ENCODE measurements at regions of chr15 and their contacts with region 1.

Region 1: DNA sequence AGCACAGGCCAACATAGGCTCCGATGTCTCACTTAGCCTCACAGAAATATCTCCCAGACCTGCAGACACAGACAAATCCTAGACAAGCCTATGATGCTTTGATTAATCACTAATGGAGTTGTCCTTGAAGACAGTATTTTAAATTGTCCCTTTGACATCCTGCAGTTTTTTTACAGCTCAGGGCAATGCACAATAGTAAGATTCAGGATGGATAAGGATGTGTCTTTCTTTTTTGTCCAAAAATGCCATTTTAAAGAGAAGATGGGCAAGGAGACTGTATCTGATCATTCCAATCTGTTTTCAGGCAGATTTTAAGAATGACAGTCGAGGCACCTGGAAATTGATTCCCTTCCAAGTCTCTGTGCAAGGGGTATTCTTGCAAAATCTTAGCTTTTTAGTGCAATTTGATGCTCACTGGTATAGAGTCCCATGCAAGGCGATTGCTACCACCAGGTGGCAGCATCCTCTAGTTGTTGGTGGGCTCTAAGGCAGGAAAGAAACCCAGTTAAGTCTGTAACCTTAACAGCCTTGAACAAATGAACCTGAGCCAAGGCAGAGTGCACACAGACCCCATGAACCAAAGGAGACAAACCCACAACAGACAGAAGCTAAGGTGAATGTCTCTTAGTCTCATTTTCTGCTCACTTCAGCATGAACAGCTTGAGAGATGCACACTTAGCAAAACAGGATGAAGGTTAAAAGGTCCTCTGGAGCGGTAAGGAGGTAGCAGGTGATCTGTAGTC is 51.2 kb upstream of the MINAR1 start:
- DNase-seq: peak; percentile 62 to 86
- ATAC-seq: peak; percentile 62 to 86 (median 79)
- H3K4me3 ChIP-seq: no peak overlapping the region
- H3K4me3 Mint-ChIP-seq: no peak overlapping the region
- H3K27ac ChIP-seq: no peak overlapping the region
- H3K27ac Mint-ChIP-seq: no peak overlapping the region
- H3K4me1 ChIP-seq: no peaks in the 10 kb centered on the region
- H3K4me1 Mint-ChIP-seq: peaks cover 0 to 5% of the 10 kb centered on the region in 2 donors
- H3K27me3 ChIP-seq: no peaks in the 10 kb centered on the region
- H3K27me3 Mint-ChIP-seq: no peaks in the 10 kb centered on the region
- CTCF ChIP-seq: peak; percentile 82

Region 2: GRCh38 chr15:79475306-79475705 is 94.4 kb after region 1 on chr15:
- intact Hi-C with region 1: no loop called
- DNase-seq: no peak
- ATAC-seq: no peak
- H3K4me3 ChIP-seq: no peak overlapping the region
- H3K4me3 Mint-ChIP-seq: no peak overlapping the region
- H3K27ac ChIP-seq: no peak overlapping the region
- H3K27ac Mint-ChIP-seq: no peak overlapping the region
- H3K4me1 ChIP-seq: no peaks in the 10 kb centered on the region
- H3K4me1 Mint-ChIP-seq: no peaks in the 10 kb centered on the region
- H3K27me3 ChIP-seq: no peaks in the 10 kb centered on the region
- H3K27me3 Mint-ChIP-seq: no peaks in the 10 kb centered on the region
- CTCF ChIP-seq: no peak

Region 3: DNA sequence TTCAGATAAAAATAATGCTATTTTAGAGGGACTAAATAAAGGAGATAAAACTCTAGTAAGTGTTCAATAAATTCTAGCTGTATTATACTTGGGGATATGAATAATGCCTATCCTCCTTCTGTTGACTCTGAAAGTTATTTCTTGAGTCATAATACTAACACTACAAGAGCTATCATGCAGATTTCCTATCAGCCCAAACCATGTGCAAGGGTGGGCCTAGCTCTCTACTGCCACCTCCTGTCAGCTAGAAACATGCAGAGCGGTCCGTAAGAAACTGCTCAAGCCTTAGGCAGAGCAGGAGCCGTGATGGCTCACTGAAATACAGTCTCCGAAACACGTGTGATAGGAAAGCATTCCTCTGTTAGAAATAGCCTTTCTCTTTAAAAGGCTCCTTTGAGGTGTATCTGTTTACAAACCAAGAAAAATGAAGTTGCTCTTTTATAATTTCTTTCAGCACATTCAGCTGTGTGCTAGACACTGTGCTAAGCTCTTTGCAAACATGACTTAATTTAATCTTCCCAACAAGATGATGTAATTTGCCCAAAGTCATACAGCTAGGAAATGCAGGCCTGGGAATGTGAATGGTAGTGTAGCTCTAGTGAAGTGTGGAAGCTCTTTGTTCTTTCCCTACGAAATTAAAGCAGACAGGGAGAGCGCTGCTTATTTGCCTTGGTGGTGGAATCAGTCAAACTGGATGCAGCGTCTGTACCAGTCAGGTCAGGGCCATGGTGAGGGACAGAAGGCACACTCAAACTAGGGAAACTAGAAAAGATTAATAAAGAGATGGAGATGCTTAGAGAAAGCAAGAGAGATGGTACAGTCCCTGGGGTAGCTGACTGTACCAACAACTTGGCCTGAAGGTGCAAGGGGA is 472.8 kb after region 1 on chr15:
- intact Hi-C with region 1: loop called (anchors 1 kb)
- DNase-seq: peak; percentile 33 to 80
- ATAC-seq: peak; percentile 92 to 99 (median 99)
- H3K4me3 ChIP-seq: no peak overlapping the region
- H3K4me3 Mint-ChIP-seq: no peak overlapping the region
- H3K27ac ChIP-seq: no peak overlapping the region
- H3K27ac Mint-ChIP-seq: no peak overlapping the region
- H3K4me1 ChIP-seq: no peaks in the 10 kb centered on the region
- H3K4me1 Mint-ChIP-seq: peaks cover 9 to 14% of the 10 kb centered on the region in 2 donors
- H3K27me3 ChIP-seq: no peaks in the 10 kb centered on the region
- H3K27me3 Mint-ChIP-seq: no peaks in the 10 kb centered on the region
- CTCF ChIP-seq: peak; percentile 97

Region 4: GRCh38 chr15:80173022-80173759 is 792.3 kb after region 1 on chr15:
- intact Hi-C with region 1: loop called (anchors 1 kb)
- DNase-seq: peak; percentile 60 to 79
- ATAC-seq: peak; percentile 77 to 90 (median 77)
- H3K4me3 ChIP-seq: no peak overlapping the region
- H3K4me3 Mint-ChIP-seq: no peak overlapping the region
- H3K27ac ChIP-seq: no peak overlapping the region
- H3K27ac Mint-ChIP-seq: no peak overlapping the region
- H3K4me1 ChIP-seq: no peaks in the 10 kb centered on the region
- H3K4me1 Mint-ChIP-seq: peaks cover 0 to 12% of the 10 kb centered on the region in 2 donors
- H3K27me3 ChIP-seq: no peaks in the 10 kb centered on the region
- H3K27me3 Mint-ChIP-seq: no peaks in the 10 kb centered on the region
- CTCF ChIP-seq: peak; percentile 70

Measured in natural killer cell (primary cell).